ENCODE measurements at regions of chr9 and their contacts with region 1.

Region 1: DNA sequence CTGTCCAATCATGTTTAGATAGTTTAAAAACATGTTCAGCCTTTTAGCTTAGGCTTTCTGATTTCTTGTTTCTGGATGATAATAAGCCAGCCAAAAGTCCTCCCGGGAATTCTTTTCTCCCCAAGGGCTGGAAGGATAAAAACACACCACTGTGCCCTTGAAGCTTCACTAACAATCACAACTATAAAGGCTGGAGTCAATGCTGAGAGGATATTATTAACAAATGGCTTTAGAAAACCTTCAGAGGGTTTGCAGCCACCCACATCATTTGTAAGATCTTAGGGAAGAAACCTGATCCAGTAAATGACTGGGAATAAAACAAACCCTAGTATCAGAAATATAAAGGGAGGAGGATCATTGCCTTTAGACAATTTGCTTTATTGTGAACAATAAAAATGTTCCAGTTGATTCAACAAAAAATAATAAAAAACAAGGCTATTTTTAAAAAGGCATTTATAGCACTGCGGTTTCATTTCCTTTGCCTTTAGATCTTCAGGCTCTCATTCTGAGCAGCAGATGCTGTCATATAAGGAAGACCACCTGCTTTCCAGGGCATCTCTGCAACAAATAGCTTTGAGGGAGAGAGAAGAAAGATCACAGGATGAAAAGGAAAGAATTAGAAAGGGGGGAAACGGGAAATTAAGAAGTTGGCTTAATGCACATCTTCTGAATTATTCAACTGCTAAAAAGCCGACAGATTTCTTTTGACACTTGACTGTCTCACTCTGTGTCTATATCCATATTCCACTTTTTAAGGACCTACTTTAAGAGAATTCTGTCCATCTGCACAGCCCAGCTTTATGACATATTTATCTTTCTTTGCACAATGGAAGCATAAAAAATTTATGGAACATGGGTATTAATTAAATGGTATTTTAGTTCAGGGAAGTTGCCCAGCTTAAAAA is 277.2 kb upstream of the SLC24A2 start:
- DNase-seq: peak; percentile 89
- H3K4me3 ChIP-seq: no peak overlapping the region
- H3K27ac ChIP-seq: peak overlapping the region; percentile 69
- H3K4me1 ChIP-seq: peaks cover 24% of the 10 kb centered on the region
- H3K27me3 ChIP-seq: no peaks in the 10 kb centered on the region
- CTCF ChIP-seq: no peak

Region 2: GRCh38 chr9:19946441-19947109 is 119.5 kb before region 1 on chr9:
- CTCF ChIA-PET with region 1: interaction called, 3 read pairs
- POLR2A ChIA-PET with region 1: no interaction called
- intact Hi-C with region 1: loop called (anchors 5 kb)
- DNase-seq: peak; percentile 57
- H3K4me3 ChIP-seq: no peak overlapping the region
- H3K27ac ChIP-seq: no peak overlapping the region
- H3K4me1 ChIP-seq: peaks cover 21% of the 10 kb centered on the region
- H3K27me3 ChIP-seq: no peaks in the 10 kb centered on the region
- CTCF ChIP-seq: peak; percentile 62

Region 3: GRCh38 chr9:20002011-20002410 is 64.0 kb before region 1 on chr9:
- CTCF ChIA-PET with region 1: no interaction called
- POLR2A ChIA-PET with region 1: no interaction called
- intact Hi-C with region 1: no loop called
- DNase-seq: no peak
- H3K4me3 ChIP-seq: no peak overlapping the region
- H3K27ac ChIP-seq: no peak overlapping the region
- H3K4me1 ChIP-seq: peaks cover 19% of the 10 kb centered on the region
- H3K27me3 ChIP-seq: no peaks in the 10 kb centered on the region
- CTCF ChIP-seq: no peak

Region 4: DNA sequence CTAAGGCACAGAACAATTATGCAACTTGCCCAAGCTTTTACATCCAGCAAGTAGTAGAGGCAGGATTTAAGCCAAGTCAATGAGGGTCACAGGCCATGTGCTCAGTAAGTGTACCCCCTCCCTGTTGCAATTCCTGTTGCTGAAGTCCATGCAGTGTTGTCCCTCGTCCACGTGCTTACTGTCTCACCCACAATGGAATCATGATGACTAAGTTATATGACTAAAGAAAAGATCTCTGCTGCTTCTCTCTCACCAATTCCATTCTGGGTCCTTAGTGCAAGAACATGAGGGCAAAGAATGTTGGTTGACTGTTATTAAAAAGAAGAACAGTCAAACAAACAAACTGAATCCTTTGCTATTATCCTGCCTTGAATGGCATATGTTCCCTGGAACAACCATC is 43.6 kb before region 1 on chr9:
- CTCF ChIA-PET with region 1: no interaction called
- POLR2A ChIA-PET with region 1: no interaction called
- intact Hi-C with region 1: no loop called
- DNase-seq: no peak
- H3K4me3 ChIP-seq: no peak overlapping the region
- H3K27ac ChIP-seq: no peak overlapping the region
- H3K4me1 ChIP-seq: no peaks in the 10 kb centered on the region
- H3K27me3 ChIP-seq: no peaks in the 10 kb centered on the region
- CTCF ChIP-seq: no peak